Psoas muscle (tissue), 8 donors: ENCODE measurements at regions of chr6 and their contacts with region 1.

Region 1: DNA sequence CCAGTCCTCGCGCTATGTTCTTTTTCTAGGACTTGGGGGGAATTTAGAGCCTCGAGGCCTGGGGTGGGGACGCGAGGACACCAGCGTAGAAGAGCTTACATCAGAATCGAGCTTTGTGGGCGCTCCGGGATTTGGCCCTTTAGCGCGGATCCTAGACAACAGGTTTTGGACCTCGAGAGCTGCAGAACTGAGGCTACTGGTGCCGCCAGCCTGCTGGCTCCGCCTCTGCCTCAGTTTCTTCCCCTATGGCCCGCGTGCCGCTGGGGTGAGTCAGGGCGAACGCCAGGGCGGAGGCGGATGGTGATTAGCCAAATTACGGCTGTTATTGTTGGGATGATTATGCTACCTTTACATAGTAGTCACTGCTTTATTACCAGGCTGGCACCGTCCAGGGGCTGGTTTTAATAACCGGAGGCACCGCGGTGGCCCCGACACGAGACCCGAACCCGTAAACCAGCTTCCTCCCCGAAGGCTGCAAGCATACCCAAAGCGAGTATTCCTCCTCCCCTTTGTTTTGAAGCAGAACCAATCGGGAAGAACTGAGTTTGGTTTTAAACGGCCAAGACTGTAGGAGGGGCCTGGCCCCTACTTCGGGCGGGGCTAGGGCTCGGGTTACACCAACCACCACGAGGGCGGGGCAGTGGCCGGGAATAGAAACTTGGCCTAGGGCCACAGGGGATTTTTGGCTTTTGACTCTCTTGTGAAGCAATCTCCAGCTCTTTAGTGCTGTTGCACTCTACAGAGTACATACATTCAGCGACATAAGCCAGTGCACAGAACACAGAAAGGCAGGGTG is 639 bp upstream of the GTPBP2 start:
- DNase-seq: peak; percentile 95 to 97
- ATAC-seq: peak; percentile 85 to 90 (median 86)
- H3K4me3 ChIP-seq: peak overlapping the region; percentile 89
- H3K27ac ChIP-seq: peak overlapping the region; percentile 95
- H3K4me1 ChIP-seq: peaks cover 26% of the 10 kb centered on the region
- H3K27me3 ChIP-seq: no peaks in the 10 kb centered on the region
- CTCF ChIP-seq: no peak

Region 2: GRCh38 chr6:43575772-43576551 is 53.7 kb before region 1 on chr6 and contains the starts of genes POLH and XPO5:
- intact Hi-C with region 1: loop called in 1 of 2 experiments (anchors 5 kb)
- DNase-seq: peak; percentile 94 to 97
- ATAC-seq: peak; percentile 99
- H3K4me3 ChIP-seq: peak within 1 kb of the TSS; percentile 96
- H3K27ac ChIP-seq: peak within 1 kb of the TSS; percentile 83
- H3K4me1 ChIP-seq: peaks cover 13% of the 10 kb centered on the region
- H3K27me3 ChIP-seq: no peaks in the 10 kb centered on the region
- CTCF ChIP-seq: peak; percentile 25
- total RNA-seq, gene POLH: 3.6 to 6.4 (median 5.5) TPM
- total RNA-seq, gene XPO5: 17.5 to 40.1 (median 20.1) TPM